ENCODE measurements at regions of chr6 and their contacts with region 1.

Region 1: GRCh38 chr6:150395398-150396009 is 26.7 kb downstream of the IYD start:
- DNase-seq: peak; percentile 50
- H3K4me3 ChIP-seq: no peak overlapping the region
- H3K27ac ChIP-seq: no peak overlapping the region
- H3K4me1 ChIP-seq: no peaks in the 10 kb centered on the region
- H3K27me3 ChIP-seq: peaks cover 5 to 11% of the 10 kb centered on the region in 2 experiments
- CTCF ChIP-seq: peak; percentile 59 to 70
- POLR2A ChIP-seq: no peak

Region 2: GRCh38 chr6:150079604-150080003 is 315.9 kb before region 1 on chr6:
- CTCF ChIA-PET with region 1: interaction called, 178 read pairs
- POLR2A ChIA-PET with region 1: no interaction called
- dilution Hi-C with region 1: no loop called
- intact Hi-C with region 1: loop called (anchors 1 kb)
- DNase-seq: no peak
- H3K4me3 ChIP-seq: no peak overlapping the region
- H3K27ac ChIP-seq: no peak overlapping the region
- H3K4me1 ChIP-seq: no peaks in the 10 kb centered on the region
- H3K27me3 ChIP-seq: peaks cover 11 to 12% of the 10 kb centered on the region in 2 experiments
- CTCF ChIP-seq: no peak
- POLR2A ChIP-seq: no peak

Region 3: GRCh38 chr6:150334790-150335783 is 60.4 kb before region 1 on chr6:
- CTCF ChIA-PET with region 1: interaction called, 5 read pairs
- POLR2A ChIA-PET with region 1: no interaction called
- dilution Hi-C with region 1: no loop called
- intact Hi-C with region 1: loop called (anchors 5 kb)
- DNase-seq: peak; percentile 65
- H3K4me3 ChIP-seq: no peak overlapping the region
- H3K27ac ChIP-seq: no peak overlapping the region
- H3K4me1 ChIP-seq: no peaks in the 10 kb centered on the region
- H3K27me3 ChIP-seq: peaks cover 3 to 12% of the 10 kb centered on the region in 2 experiments
- CTCF ChIP-seq: peak; percentile 61 to 62
- POLR2A ChIP-seq: no peak

Region 4: DNA sequence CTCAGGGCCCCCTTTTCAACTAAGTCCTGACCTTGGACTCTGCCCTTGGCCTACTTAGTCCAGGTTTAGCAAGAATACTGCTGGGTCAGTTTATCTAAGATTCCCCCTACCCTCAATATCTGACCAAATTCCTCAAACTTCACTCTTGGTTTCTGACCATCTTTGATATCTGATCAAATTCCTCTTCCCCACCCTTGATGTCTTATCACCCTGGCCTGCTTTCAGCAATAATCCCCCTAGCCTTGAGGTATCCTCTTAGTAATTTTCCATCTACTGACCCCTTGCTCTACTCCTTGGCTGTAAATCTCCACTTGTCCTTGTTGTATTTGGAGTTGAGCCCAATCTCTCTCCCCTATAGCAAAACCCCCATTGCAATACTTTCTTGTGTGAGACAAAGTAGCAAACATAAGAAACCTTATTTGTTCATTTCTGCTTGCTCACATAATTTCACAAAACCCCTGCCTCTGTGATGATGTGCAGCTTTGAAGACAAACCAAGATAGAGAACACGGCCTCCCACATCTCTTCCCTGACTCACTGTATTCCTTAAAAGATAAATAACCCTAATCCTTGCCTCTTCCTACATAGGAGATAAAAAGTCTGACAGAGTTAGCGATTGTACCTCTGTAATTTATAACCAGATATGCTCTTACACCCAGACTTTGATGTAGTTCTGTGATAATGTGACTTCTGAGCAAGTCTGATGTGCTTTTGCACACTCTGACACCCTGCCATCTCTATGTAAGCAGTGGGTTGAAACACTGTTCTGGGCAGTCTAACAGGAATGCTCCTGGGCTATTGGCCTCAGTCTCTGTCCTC is 40.5 kb before region 1 on chr6:
- CTCF ChIA-PET with region 1: interaction called, 11 read pairs
- POLR2A ChIA-PET with region 1: no interaction called
- dilution Hi-C with region 1: no loop called
- intact Hi-C with region 1: no loop called
- DNase-seq: no peak
- H3K4me3 ChIP-seq: no peak overlapping the region
- H3K27ac ChIP-seq: no peak overlapping the region
- H3K4me1 ChIP-seq: no peaks in the 10 kb centered on the region
- H3K27me3 ChIP-seq: peaks cover 3 to 5% of the 10 kb centered on the region in 2 experiments
- CTCF ChIP-seq: no peak
- POLR2A ChIP-seq: no peak

Region 5: GRCh38 chr6:150363733-150364132 is 31.8 kb before region 1 on chr6:
- CTCF ChIA-PET with region 1: interaction called, 11 read pairs
- POLR2A ChIA-PET with region 1: no interaction called
- dilution Hi-C with region 1: no loop called
- intact Hi-C with region 1: no loop called
- DNase-seq: no peak
- H3K4me3 ChIP-seq: no peak overlapping the region
- H3K27ac ChIP-seq: no peak overlapping the region
- H3K4me1 ChIP-seq: no peaks in the 10 kb centered on the region
- H3K27me3 ChIP-seq: peaks cover 0 to 4% of the 10 kb centered on the region in 2 experiments
- CTCF ChIP-seq: no peak
- POLR2A ChIP-seq: no peak

Region 6: GRCh38 chr6:150382171-150382570 is 13.3 kb before region 1 on chr6:
- CTCF ChIA-PET with region 1: interaction called, 45 read pairs
- POLR2A ChIA-PET with region 1: no interaction called
- dilution Hi-C with region 1: no loop called
- intact Hi-C with region 1: no loop called
- DNase-seq: no peak
- H3K4me3 ChIP-seq: no peak overlapping the region
- H3K27ac ChIP-seq: no peak overlapping the region
- H3K4me1 ChIP-seq: no peaks in the 10 kb centered on the region
- H3K27me3 ChIP-seq: peaks cover 0 to 5% of the 10 kb centered on the region in 2 experiments
- CTCF ChIP-seq: no peak
- POLR2A ChIP-seq: no peak

Region 7: DNA sequence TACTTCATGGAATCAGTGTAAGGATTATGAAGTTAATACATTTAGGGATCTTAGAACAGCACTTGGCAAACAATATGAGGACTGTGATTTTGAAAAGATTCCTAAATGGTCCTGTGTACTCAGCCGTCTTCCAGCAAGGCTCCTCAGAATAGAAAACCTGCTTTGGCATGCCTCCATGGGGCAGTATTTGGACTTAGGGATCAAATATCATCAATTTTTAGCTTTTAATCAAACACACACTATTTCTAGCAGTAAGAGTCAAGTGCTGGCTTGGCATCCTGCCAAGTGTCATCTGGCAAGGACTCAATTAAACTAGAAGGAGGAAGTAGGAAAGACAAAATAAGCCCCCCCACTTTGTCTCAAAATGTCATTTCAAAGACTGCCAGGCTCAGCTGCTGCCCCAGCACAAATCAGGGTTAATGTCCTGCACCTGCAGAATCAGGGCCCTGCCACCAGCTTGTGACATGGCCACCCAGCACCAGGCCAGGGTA is 14.1 kb after region 1 on chr6:
- CTCF ChIA-PET with region 1: interaction called, 17 read pairs
- POLR2A ChIA-PET with region 1: no interaction called
- dilution Hi-C with region 1: no loop called
- intact Hi-C with region 1: no loop called
- DNase-seq: peak; percentile 20
- H3K4me3 ChIP-seq: no peak overlapping the region
- H3K27ac ChIP-seq: no peak overlapping the region
- H3K4me1 ChIP-seq: no peaks in the 10 kb centered on the region
- H3K27me3 ChIP-seq: peaks cover 26 to 27% of the 10 kb centered on the region in 2 experiments
- CTCF ChIP-seq: no peak
- POLR2A ChIP-seq: no peak

Region 8: GRCh38 chr6:150430815-150431214 is 35.3 kb after region 1 on chr6:
- CTCF ChIA-PET with region 1: no interaction called
- POLR2A ChIA-PET with region 1: no interaction called
- dilution Hi-C with region 1: no loop called
- intact Hi-C with region 1: no loop called
- DNase-seq: no peak
- H3K4me3 ChIP-seq: no peak overlapping the region
- H3K27ac ChIP-seq: no peak overlapping the region
- H3K4me1 ChIP-seq: no peaks in the 10 kb centered on the region
- H3K27me3 ChIP-seq: peaks cover 0 to 4% of the 10 kb centered on the region in 2 experiments
- CTCF ChIP-seq: no peak
- POLR2A ChIP-seq: no peak

Region 9: DNA sequence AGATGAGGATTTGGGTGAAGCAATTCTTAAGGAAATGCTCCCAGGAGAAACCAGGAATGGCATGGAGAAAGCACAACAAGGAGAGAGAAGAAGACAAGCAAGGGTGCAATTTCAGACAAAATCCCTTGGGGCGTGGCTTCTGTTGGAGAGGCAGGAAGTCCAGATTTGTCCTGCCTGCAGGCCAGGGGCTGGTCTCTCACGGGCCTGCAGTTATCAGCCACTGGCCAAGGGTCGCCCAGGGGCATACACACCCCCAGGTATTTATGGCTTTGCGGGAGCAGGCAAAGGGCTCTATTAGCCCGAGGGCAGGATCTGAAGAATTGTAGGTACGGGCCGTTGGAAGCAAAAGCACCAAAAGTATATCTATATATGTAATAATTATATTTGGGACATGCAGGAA is 61.0 kb after region 1 on chr6:
- CTCF ChIA-PET with region 1: no interaction called
- POLR2A ChIA-PET with region 1: no interaction called
- dilution Hi-C with region 1: no loop called
- intact Hi-C with region 1: no loop called
- DNase-seq: no peak
- H3K4me3 ChIP-seq: no peak overlapping the region
- H3K27ac ChIP-seq: no peak overlapping the region
- H3K4me1 ChIP-seq: peaks cover 11% of the 10 kb centered on the region
- H3K27me3 ChIP-seq: no peaks in the 10 kb centered on the region
- CTCF ChIP-seq: no peak
- POLR2A ChIP-seq: no peak

Region 10: GRCh38 chr6:150486034-150486433 is 90.5 kb after region 1 on chr6:
- CTCF ChIA-PET with region 1: no interaction called
- POLR2A ChIA-PET with region 1: no interaction called
- dilution Hi-C with region 1: no loop called
- intact Hi-C with region 1: no loop called
- DNase-seq: peak; percentile 26
- H3K4me3 ChIP-seq: no peak overlapping the region
- H3K27ac ChIP-seq: no peak overlapping the region
- H3K4me1 ChIP-seq: no peaks in the 10 kb centered on the region
- H3K27me3 ChIP-seq: no peaks in the 10 kb centered on the region
- CTCF ChIP-seq: no peak
- POLR2A ChIP-seq: no peak

Measured in endothelial cell of umbilical vein (primary cell).